Heart left ventricle (tissue), 16 donors: ENCODE measurements at regions of chr20 and their contacts with region 1.

Region 1: GRCh38 chr20:58888521-58889333 is 36.2 kb downstream of the GNAS start:
- DNase-seq: peak; percentile 82 to 90 (median 86)
- ATAC-seq: peak; percentile 56 to 73 (median 70)
- H3K4me3 ChIP-seq: peak overlapping the region; percentile 21 to 97 (median 86)
- H3K27ac ChIP-seq: peak overlapping the region; percentile 56 to 100 (median 98)
- H3K4me1 ChIP-seq: peaks cover 0 to 19% (median 9%) of the 10 kb centered on the region in 12 donors
- H3K27me3 ChIP-seq: no peaks in the 10 kb centered on the region
- CTCF ChIP-seq: no peak
- POLR2A ChIP-seq: peak; percentile 87 to 96

Region 2: DNA sequence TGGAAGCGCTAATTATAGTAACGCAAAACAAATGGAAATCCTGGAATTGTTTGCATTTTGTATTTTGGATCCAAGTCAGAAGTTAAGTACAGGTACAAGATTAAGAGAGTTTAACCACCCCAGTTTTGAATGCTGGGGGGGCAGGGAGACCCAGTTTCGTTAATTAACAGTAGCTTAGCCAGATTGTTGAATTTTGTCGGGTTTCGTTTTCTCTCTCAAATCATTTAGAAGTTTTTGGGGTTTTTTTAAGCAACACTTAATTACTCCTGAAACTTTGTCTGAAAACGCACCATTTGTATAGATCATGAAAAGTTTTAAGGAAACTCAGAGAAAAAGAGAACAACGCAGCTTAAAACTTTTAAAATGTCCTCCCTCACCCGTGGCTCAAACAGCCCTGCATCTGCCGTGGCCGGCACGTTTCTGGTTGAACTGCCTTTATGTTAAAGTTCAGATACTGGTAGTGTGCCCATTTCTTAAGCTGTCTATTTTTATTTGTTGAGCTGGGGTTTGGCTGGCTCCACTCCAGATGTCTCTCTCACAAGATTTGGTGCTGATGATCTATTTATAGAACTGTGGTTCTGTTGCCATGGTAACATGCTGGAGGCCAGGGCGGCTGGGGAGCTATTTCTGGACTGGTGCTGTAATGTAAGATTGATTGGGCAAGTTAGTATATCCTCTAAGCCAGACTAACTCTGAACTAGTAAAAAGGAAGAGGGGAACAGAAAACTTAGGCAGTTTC is 18.8 kb after region 1 on chr20:
- intact Hi-C with region 1: loop called in 2 of 10 experiments (anchors 2 kb)
- DNase-seq: peak; percentile 86 to 94 (median 94)
- ATAC-seq: peak; percentile 91 to 98 (median 94)
- H3K4me3 ChIP-seq: peak overlapping the region in 9 of 12 donors; percentile 5 to 46 (median 30)
- H3K27ac ChIP-seq: peak overlapping the region; percentile 64 to 93 (median 84)
- H3K4me1 ChIP-seq: peaks cover 0 to 73% (median 50%) of the 10 kb centered on the region in 12 donors
- H3K27me3 ChIP-seq: no peaks in the 10 kb centered on the region
- CTCF ChIP-seq: no peak
- POLR2A ChIP-seq: no peak

Region 3: GRCh38 chr20:58921564-58921963 is 32.8 kb after region 1 on chr20:
- intact Hi-C with region 1: no loop called
- DNase-seq: no peak
- ATAC-seq: no peak
- H3K4me3 ChIP-seq: no peak overlapping the region
- H3K27ac ChIP-seq: no peak overlapping the region
- H3K4me1 ChIP-seq: peaks cover 0 to 3% (median 0%) of the 10 kb centered on the region in 12 donors
- H3K27me3 ChIP-seq: no peaks in the 10 kb centered on the region
- CTCF ChIP-seq: no peak
- POLR2A ChIP-seq: no peak

Region 4: DNA sequence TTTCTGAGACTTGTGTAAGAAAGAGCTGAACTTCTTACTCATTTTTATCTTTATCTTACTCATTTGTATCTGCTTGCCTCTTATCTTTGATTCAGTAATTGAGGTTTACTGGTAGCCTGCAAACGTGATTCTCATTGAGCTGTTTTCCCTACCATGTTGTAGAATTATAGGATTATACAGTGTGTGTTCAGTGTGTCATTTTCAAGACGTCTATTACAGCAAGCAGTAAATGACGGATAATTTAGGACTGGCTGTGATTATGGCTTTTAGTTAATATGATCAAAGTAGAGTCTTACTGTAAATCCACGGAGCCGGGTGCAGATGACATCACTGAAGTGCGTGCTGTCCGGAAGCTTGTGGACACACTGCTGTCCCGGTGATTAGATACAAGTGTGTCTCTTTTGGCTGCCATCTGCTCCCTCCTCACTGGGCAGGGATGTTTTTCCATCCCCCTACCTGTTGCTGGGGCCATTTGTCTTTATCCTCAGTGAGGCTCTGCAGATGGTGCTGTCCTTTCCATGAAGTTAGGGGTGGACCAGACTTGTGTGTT is 98.3 kb after region 1 on chr20:
- intact Hi-C with region 1: loop called in 4 of 10 experiments (anchors 5 kb)
- DNase-seq: peak in 2 of 5 donors; percentile 9 to 24
- ATAC-seq: peak in 1 of 4 donors; percentile 25
- H3K4me3 ChIP-seq: no peak overlapping the region
- H3K27ac ChIP-seq: no peak overlapping the region
- H3K4me1 ChIP-seq: peaks cover 0 to 46% (median 29%) of the 10 kb centered on the region in 12 donors
- H3K27me3 ChIP-seq: no peaks in the 10 kb centered on the region
- CTCF ChIP-seq: no peak
- POLR2A ChIP-seq: no peak

Region 5: DNA sequence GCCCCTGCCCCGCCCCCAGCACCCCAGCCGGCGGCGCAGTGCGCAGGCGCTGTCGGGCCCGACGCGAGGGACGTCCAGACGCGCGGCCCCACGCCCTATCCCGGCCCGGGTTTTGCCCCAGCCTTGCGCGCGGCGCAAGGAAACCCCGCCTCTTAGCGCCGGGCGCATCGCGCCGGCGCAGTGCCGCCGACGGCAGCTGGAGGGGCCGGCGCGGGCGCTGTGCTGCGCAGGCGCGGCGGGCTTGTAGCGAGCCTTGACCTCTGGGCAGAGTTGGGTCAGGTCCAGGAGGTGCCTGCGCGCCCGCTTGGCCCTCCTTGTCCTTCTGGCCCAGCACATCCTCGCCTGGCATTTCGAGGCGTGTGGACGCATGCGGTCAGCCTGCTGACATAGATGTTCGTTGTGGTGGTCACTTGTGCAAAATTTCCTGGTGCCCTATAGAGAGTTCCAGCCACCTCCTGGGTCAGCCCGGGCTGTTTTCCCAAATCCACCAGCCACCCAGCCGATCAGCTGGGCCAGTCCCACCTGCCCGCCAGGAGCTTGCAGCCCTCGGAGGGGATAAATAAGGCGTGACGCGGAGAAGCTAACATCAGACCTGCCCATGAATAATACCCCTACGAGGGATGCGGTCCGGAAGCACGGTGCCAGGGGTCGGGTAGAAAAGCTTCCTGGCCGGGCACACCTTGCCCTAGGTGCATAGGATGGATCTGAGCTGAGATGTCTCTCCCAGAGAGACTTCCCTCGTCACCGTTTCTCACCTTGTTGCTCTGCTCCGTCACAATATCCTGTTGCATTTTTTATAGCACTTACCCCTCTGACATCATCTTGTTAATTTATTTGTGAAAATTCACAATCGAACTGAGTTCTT is 154.3 kb after region 1 on chr20:
- intact Hi-C with region 1: loop called in 4 of 10 experiments (anchors 5 kb)
- DNase-seq: peak; percentile 94 to 97 (median 94)
- ATAC-seq: peak; percentile 95 to 99 (median 98)
- H3K4me3 ChIP-seq: peak overlapping the region; percentile 60 to 97 (median 76)
- H3K27ac ChIP-seq: peak overlapping the region; percentile 68 to 92 (median 86)
- H3K4me1 ChIP-seq: peaks cover 9 to 45% (median 28%) of the 10 kb centered on the region in 12 donors
- H3K27me3 ChIP-seq: no peaks in the 10 kb centered on the region
- CTCF ChIP-seq: peak in 1 of 12 donors; percentile 12
- POLR2A ChIP-seq: peak in 1 of 2 donors; percentile 57